Ovary (tissue), 10 donors: ENCODE measurements at regions of chr1 and their contacts with region 1.

Region 1: DNA sequence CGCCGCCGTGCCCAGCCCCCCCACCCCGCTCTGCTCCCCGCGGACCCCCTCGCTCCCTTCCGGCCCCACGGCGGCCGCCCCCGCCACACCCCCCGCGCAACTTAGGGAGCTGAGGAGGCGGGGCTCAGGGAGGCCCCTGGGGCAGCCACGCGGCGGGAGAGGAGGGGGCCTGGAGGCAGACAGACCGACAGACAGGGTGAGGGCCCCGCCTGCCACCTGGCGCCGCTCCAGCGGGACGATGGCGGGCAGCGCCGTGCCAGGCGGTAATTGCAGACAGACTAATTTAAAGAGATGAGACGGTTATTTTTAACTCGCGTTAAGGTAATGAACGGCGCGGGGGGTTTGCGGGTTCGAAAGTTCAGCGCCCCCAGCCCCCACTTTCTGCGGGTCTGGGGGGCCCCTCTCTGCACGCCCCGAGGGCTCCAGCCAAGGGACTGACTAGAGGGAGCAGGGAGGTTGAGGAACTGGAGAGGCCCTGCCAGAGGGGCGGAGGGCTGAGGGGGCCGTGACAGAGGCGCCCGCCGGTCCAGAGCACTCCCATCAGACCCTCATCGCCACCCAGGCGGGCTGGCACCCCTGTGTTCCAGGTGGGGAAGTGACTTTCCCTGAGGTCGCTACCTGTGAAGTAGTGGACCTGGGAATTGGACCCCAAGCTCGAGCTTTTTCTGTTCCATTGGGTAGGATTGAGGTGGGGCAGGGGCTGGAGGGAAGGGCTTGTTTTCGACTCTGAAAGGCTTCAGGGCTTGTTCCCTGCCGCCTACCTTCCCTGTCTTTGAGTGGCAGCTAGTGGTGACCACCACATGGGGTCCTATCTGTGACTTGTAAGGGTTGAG is 5.4 kb downstream of the FOXO6 start:
- DNase-seq: peak in 4 of 5 donors; percentile 63 to 77 (median 70)
- H3K4me3 ChIP-seq: peak overlapping the region; percentile 43
- H3K27ac ChIP-seq: peak overlapping the region in 1 of 2 donors; percentile 65
- H3K4me1 ChIP-seq: peaks cover 23% of the 10 kb centered on the region
- H3K27me3 ChIP-seq: no peaks in the 10 kb centered on the region
- CTCF ChIP-seq: no peak
- EP300 ChIP-seq: no peak
- POLR2A ChIP-seq: no peak

Region 2: DNA sequence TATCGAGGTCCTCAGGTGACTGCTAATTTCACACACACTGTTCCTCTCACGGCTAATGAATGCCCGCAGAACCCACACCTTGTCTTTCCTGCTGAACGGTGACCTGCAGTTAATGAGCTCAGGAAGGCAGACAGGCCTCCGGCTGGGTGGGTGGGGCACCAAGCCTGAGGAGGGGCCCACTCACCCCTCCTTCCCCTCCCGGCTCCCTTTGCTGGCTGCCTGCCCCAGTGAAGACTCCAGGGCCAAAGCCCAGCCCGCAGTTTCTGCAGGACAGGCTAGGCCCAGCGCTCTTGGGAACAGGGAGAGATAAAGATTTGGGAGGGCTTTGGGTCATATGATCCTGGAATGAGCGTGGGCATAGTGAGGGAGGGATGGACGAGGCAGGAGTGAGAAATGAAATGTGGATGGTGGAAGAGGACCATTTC is 21.0 kb after region 1 on chr1:
- intact Hi-C with region 1: no loop called
- DNase-seq: peak; percentile 89 to 94 (median 91)
- H3K4me3 ChIP-seq: no peak overlapping the region
- H3K27ac ChIP-seq: peak overlapping the region in 1 of 2 donors; percentile 14
- H3K4me1 ChIP-seq: peaks cover 25% of the 10 kb centered on the region
- H3K27me3 ChIP-seq: no peaks in the 10 kb centered on the region
- CTCF ChIP-seq: no peak
- EP300 ChIP-seq: no peak
- POLR2A ChIP-seq: no peak

Region 3: GRCh38 chr1:41407664-41408252 is 41.1 kb after region 1 on chr1:
- intact Hi-C with region 1: loop called in 2 of 4 experiments (anchors 2 to 5 kb)
- DNase-seq: no peak
- H3K4me3 ChIP-seq: no peak overlapping the region
- H3K27ac ChIP-seq: no peak overlapping the region
- H3K4me1 ChIP-seq: no peaks in the 10 kb centered on the region
- H3K27me3 ChIP-seq: no peaks in the 10 kb centered on the region
- CTCF ChIP-seq: no peak
- EP300 ChIP-seq: no peak
- POLR2A ChIP-seq: no peak

Region 4: GRCh38 chr1:41420860-41421259 is 54.2 kb after region 1 on chr1:
- intact Hi-C with region 1: no loop called
- DNase-seq: peak in 1 of 5 donors; percentile 33
- H3K4me3 ChIP-seq: no peak overlapping the region
- H3K27ac ChIP-seq: no peak overlapping the region
- H3K4me1 ChIP-seq: no peaks in the 10 kb centered on the region
- H3K27me3 ChIP-seq: no peaks in the 10 kb centered on the region
- CTCF ChIP-seq: no peak
- EP300 ChIP-seq: no peak
- POLR2A ChIP-seq: no peak

Region 5: DNA sequence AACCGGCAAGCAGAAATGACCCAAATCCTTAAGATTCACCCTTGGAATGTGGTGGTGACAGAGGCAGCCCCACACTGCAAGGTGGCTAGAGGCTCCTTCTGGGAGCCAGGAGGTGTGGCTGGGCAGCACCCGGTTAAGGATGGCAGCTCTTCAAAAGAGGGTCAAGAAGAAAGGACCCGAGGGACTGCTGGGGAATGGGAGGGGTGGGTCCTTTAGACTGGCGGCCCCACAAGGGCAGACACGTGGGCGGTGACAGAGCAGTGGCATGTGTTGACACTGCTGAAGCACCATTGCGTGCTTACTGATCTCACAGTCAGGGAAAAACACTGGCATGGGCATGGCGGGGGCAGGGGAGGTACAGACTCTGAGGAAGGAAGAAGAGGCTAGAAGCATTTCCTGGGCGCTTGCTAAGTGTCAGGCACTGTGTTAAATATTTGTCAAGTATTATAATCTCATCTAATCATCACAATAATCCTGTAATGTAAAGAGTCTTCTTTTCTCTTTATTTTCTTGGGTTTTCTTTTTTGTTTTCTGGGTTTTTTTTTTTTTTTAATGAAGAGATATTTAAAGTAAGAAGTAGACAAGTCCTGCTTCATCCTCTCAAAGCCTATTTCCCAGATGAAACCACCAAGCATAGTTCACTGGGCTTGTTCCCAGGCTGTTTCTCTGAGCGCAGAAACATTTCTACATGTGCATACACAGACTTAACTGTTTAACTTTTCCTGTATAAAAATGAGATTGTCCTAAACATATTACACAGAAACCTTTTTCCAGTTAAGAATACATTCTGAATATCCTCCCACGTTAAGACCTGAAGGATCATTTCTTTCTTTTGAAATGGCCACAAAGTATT is 283.6 kb after region 1 on chr1:
- intact Hi-C with region 1: no loop called
- DNase-seq: no peak
- H3K4me3 ChIP-seq: no peak overlapping the region
- H3K27ac ChIP-seq: no peak overlapping the region
- H3K4me1 ChIP-seq: no peaks in the 10 kb centered on the region
- H3K27me3 ChIP-seq: no peaks in the 10 kb centered on the region
- CTCF ChIP-seq: no peak
- EP300 ChIP-seq: no peak
- POLR2A ChIP-seq: no peak

Region 6: DNA sequence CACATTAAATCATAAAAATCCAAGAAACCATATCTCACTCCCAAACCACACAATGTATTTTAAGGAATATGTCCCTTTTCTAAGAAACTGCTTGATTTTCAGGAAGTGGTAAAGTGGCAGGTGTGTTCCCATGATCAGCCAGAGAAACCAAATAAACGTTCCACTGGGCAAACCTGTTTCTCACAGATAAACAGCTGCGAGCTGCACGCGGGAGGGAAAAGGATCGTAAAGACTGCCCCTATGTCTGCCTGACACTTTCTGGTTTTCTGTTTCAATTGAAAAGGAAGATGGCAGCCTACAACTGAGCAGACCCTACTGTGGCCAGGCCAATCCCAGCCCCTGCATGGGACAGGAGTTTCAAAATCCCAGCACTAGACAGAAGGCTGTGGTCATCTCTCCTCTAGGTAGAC is 515.4 kb after region 1 on chr1:
- intact Hi-C with region 1: no loop called
- DNase-seq: no peak
- H3K4me3 ChIP-seq: no peak overlapping the region
- H3K27ac ChIP-seq: no peak overlapping the region
- H3K4me1 ChIP-seq: peaks cover 3% of the 10 kb centered on the region
- H3K27me3 ChIP-seq: no peaks in the 10 kb centered on the region
- CTCF ChIP-seq: no peak
- EP300 ChIP-seq: no peak
- POLR2A ChIP-seq: no peak